ENCODE measurements at regions of chr5 and their contacts with region 1.

Region 1: GRCh38 chr5:55534436-55535198 is at the start of gene PLPP1:
- DNase-seq: peak; percentile 91
- H3K4me3 ChIP-seq: peak within 1 kb of the TSS; percentile 52 to 93 (median 72)
- H3K27ac ChIP-seq: peak within 1 kb of the TSS; percentile 62
- H3K4me1 ChIP-seq: peaks cover 11% of the 10 kb centered on the region
- H3K27me3 ChIP-seq: no peaks in the 10 kb centered on the region
- CTCF ChIP-seq: no peak
- total RNA-seq, gene PLPP1: 18.8 to 122 TPM

Region 2: DNA sequence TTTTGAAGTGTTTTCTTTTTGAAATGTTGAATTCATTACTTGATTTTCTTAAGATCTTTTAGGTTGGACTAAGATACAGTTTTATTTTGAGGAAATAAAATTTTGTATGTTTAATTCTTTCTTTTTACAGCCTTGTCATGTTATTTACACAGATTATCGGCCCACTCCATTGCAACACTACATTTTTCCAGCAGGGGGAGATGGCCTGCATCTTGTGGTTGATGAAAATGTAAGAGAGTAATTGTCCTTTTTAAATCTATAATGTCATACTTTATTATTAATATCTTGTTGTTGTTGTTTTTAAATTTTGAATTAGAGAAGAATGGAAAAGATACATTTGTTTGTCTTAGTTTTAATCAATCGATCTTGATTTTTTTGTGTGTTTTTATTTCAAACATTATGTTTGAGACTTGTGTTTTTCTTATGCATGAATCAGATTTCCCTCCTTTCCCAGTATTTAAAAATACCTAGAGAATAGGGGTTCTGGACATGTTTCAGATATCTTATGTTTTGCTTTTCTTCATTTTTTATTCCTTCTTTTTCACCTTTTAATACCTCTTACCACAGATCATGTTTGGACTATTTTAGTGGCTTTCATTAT is 190.1 kb before region 1 on chr5:
- CTCF ChIA-PET with region 1: no interaction called
- dilution Hi-C with region 1: no loop called
- in situ Hi-C with region 1: no loop called
- intact Hi-C with region 1: loop called (anchors 10 kb)
- DNase-seq: peak; percentile 29
- H3K4me3 ChIP-seq: no peak overlapping the region
- H3K27ac ChIP-seq: no peak overlapping the region
- H3K4me1 ChIP-seq: no peaks in the 10 kb centered on the region
- H3K27me3 ChIP-seq: no peaks in the 10 kb centered on the region
- CTCF ChIP-seq: peak; percentile 87

Region 3: GRCh38 chr5:55418994-55419968 is 115.3 kb before region 1 on chr5:
- CTCF ChIA-PET with region 1: no interaction called
- dilution Hi-C with region 1: no loop called
- in situ Hi-C with region 1: no loop called
- intact Hi-C with region 1: loop called (anchors 5 kb)
- DNase-seq: no peak
- H3K4me3 ChIP-seq: no peak overlapping the region
- H3K27ac ChIP-seq: no peak overlapping the region
- H3K4me1 ChIP-seq: no peaks in the 10 kb centered on the region
- H3K27me3 ChIP-seq: no peaks in the 10 kb centered on the region
- CTCF ChIP-seq: no peak

Region 4: GRCh38 chr5:55439008-55439407 is 95.6 kb before region 1 on chr5:
- CTCF ChIA-PET with region 1: no interaction called
- dilution Hi-C with region 1: no loop called
- in situ Hi-C with region 1: no loop called
- intact Hi-C with region 1: loop called (anchors 2 kb)
- DNase-seq: no peak
- H3K4me3 ChIP-seq: no peak overlapping the region
- H3K27ac ChIP-seq: peak overlapping the region; percentile 19
- H3K4me1 ChIP-seq: peaks cover 25% of the 10 kb centered on the region
- H3K27me3 ChIP-seq: no peaks in the 10 kb centered on the region
- CTCF ChIP-seq: no peak

Measured in mammary epithelial cell (primary cell).